Sciatic nerve (tissue), 2 donors: ENCODE measurements at regions of chr15 and their contacts with region 1.

Region 1: DNA sequence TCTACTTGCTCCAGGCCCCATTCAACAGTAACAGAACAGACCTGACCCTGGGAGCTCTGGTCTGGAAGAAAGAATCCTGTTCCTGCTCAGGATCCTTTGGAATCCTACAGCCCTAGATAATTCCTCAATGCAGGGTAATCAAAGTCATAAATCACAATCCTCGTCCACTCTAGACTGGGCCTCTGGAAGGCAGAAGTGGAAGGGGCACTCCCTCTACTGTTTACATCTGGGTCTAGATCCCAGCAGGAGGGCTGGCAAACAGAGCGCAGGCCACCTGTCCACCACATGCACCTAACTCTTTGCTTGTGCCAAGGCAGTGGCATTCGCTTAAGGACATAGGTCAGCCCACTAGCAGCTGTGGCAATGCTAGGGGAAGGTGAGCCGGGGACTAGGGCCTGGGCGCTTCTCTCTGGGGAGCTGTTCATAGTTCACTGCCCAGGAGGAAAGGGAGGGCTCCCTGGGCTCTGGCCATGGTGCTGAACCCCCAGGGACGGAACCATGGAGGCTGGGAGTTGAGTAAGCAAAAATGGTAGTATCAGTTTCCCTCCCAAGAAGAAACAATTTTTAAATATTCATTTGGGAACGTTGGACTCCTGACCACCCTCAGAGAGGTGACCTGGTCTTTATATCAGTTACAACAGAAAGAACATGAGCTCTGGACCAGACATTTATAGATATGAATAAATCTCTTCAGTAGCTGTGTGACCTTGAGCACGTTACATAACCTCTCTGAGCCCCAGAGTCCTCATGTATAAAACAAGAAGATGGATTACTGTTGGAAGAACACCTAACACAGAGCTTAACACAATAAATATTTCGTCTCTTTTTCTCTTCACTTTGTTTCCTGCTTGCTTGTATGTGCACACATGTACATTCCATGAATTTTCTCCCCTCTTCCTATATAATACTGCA is 90.2 kb downstream of the NTRK3 start:
- DNase-seq: no peak
- ATAC-seq: no peak

Region 2: DNA sequence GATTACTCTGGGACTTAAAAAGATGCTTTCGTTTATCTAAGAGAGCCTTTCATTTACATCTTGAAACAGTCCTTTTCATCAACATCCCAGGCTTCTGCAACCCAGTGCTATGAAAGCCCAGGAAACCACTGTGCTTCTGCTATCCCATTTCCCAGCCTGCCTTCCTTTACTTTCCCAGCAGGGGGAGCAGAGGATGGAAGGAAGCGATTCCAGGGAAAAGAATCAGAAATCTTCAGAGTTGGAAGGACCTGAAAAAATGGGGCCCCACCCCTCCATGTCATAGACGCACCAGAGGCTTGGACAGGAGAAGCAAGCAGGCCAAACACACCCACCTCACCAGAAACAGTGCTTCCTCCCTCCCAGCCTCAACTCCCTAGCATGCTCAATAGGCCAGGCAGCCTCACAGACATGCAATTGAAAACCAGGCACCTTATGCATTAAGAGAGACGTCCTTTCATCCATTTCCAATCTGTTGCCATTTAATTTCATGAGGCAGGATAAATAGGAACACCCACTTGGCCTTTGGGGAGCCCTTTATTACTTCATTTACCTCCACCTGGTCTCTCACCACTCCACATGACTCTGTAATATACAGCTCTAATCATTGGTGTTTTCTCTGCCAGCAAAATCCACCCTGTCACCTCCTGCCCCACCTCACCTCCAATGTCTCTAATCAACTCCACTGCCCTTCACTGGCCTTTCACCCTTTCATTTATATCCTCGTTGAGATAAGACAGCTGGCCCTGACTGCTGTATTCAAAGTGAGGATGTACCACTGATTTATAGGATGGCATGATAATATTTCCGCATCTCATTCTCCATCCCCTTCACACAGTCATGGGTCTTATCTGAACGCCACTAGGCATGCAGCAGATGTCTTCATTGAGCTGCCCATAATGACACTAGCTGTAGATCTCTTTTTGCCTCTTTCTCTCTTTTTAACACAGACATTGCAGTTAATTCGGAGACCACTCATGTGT is 493.7 kb before region 1 on chr15:
- intact Hi-C with region 1: no loop called
- DNase-seq: peak; percentile 61
- ATAC-seq: peak; percentile 52

Region 3: GRCh38 chr15:87777054-87777561 is 389.2 kb before region 1 on chr15:
- intact Hi-C with region 1: no loop called
- DNase-seq: peak; percentile 61
- ATAC-seq: peak; percentile 91

Region 4: DNA sequence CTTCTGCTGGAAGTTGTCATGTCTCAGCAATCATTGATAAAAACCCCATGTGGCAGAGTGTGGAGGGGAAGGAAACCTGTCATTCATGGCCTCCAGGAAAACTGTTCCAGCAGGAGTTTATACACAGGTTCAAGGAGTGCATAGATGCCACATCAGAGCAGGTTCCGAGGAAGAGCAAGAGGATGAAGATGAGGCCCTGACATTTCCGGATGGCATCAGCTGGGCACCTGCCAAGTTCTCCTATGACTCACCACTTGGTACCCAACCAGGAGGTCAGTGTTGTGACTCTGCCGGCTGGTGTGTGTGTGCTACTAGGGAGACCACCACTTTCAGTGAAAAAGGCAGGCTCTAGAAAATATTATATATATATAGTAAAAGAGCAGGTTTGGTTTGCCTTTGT is 20.8 kb after region 1 on chr15:
- intact Hi-C with region 1: loop called (anchors 2 kb)
- DNase-seq: no peak
- ATAC-seq: no peak